Activated CD4-positive, alpha-beta T cell treated with anti-CD3 and anti-CD28 coated beads, Interleukin-2, amount 10 ng/mL, durations not matched to agents 7 days and 5 days (primary cell): ENCODE measurements at regions of chr3 and their contacts with region 1.

Region 1: GRCh38 chr3:15268033-15268631 is 62.1 kb downstream of the CAPN7 start:
- DNase-seq: peak; percentile 89
- H3K4me3 Mint-ChIP-seq: no peak overlapping the region
- H3K27ac Mint-ChIP-seq: no peak overlapping the region
- H3K4me1 Mint-ChIP-seq: peaks cover 60% of the 10 kb centered on the region
- H3K27me3 Mint-ChIP-seq: no peaks in the 10 kb centered on the region

Region 2: GRCh38 chr3:15256861-15257341 is 11.2 kb before region 1 on chr3:
- CTCF ChIA-PET with region 1: interaction called, 52 read pairs
- POLR2A ChIA-PET with region 1: no interaction called
- DNase-seq: no peak
- H3K4me3 Mint-ChIP-seq: no peak overlapping the region
- H3K27ac Mint-ChIP-seq: no peak overlapping the region
- H3K4me1 Mint-ChIP-seq: peaks cover 4% of the 10 kb centered on the region
- H3K27me3 Mint-ChIP-seq: no peaks in the 10 kb centered on the region

Region 3: GRCh38 chr3:15332405-15333098 is 64.4 kb after region 1 on chr3 and contains the start of gene SH3BP5:
- CTCF ChIA-PET with region 1: interaction called, 60 read pairs
- POLR2A ChIA-PET with region 1: no interaction called
- DNase-seq: peak; percentile 71
- H3K4me3 Mint-ChIP-seq: peak within 1 kb of the TSS; percentile 80
- H3K27ac Mint-ChIP-seq: peak within 1 kb of the TSS; percentile 85
- H3K4me1 Mint-ChIP-seq: peaks cover 57% of the 10 kb centered on the region
- H3K27me3 Mint-ChIP-seq: peaks cover 6% of the 10 kb centered on the region
- total RNA-seq, gene SH3BP5: 33.8 to 38.2 TPM

Region 4: DNA sequence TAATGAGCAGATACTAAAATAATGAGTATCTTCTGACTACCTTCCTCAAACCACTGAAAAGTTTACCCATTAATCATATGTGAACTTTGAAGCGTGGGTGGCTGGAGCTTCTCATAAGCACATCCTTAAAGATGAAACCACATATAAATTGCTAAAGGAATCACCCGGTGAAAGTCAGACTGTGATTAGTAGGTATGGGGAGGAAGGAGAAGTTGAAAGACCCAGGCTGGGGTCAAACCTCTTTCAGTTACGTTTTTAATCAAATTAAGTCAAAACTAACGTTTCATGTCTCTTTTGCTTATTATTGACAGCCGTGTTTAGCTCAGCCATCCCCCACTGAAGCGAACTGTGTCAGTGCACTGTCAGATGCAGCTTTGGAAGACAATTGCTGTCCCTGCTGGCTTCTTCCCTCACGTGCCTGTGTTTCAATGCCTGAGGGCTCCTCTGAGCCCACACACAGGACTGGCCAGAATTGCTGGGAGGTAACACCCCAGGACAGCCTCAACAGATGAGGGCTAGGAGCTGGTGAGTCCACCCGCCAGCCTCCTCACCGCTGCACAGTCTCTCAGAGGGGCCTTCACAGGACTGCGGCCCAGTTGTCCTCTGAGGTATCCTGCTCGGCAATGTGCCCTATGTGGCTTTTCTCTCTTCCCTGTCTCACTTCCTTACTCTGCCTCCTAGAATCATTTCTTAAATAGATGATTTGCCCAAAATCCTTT is 93.5 kb after region 1 on chr3:
- CTCF ChIA-PET with region 1: interaction called, 10 read pairs
- POLR2A ChIA-PET with region 1: no interaction called
- DNase-seq: peak; percentile 31
- H3K4me3 Mint-ChIP-seq: peak overlapping the region; percentile 10
- H3K27ac Mint-ChIP-seq: peak overlapping the region; percentile 82
- H3K4me1 Mint-ChIP-seq: peaks cover 50% of the 10 kb centered on the region
- H3K27me3 Mint-ChIP-seq: no peaks in the 10 kb centered on the region

Region 5: DNA sequence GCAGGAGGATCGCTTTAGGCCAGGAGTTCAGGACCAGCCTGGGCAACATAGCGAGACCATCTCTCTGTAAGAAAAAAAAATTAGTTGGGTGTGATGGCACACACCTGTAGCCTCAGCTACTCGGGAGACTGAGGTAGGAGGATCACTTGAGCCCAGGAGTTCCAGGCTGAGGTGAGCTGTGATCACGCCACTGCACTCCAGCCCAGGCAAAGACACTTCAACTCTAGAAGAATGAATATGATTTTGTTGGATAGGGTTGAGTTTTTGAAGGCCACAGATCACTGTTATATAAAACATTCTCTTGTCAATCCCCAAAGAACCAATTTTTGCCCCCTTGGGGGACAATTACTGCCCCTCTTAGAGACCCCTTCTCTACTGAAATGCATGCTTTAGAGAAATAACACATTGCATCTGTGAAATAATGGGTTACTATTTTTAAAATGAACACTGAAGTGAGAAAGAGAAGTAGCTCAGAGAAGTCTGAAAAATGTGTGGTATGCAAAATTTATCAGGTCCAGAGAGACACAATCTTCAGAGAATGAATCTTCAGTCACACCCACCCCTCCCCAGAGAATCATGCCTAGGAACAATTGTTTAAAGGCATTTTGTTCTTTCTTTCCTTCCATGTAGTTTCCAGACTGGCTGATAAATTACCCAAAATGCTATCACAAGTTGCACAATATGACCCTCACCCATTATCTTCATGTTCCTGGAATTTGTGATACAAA is 116.5 kb after region 1 on chr3:
- CTCF ChIA-PET with region 1: interaction called, 24 read pairs
- POLR2A ChIA-PET with region 1: no interaction called
- DNase-seq: no peak
- H3K4me3 Mint-ChIP-seq: no peak overlapping the region
- H3K27ac Mint-ChIP-seq: no peak overlapping the region
- H3K4me1 Mint-ChIP-seq: peaks cover 8% of the 10 kb centered on the region
- H3K27me3 Mint-ChIP-seq: no peaks in the 10 kb centered on the region

Region 6: GRCh38 chr3:15405448-15406050 is 137.4 kb after region 1 on chr3:
- CTCF ChIA-PET with region 1: interaction called, 29 read pairs
- POLR2A ChIA-PET with region 1: no interaction called
- DNase-seq: peak; percentile 42
- H3K4me3 Mint-ChIP-seq: no peak overlapping the region
- H3K27ac Mint-ChIP-seq: no peak overlapping the region
- H3K4me1 Mint-ChIP-seq: peaks cover 12% of the 10 kb centered on the region
- H3K27me3 Mint-ChIP-seq: no peaks in the 10 kb centered on the region